Caco-2 (cell line): ENCODE measurements at regions of chr16 and their contacts with region 1.

Region 1: GRCh38 chr16:56356276-56357240 is 68.8 kb downstream of the AMFR start:
- DNase-seq: peak; percentile 89 to 91
- H3K4me3 ChIP-seq: peak overlapping the region; percentile 37
- H3K4me3 Mint-ChIP-seq: peak overlapping the region; percentile 87
- H3K27ac Mint-ChIP-seq: peak overlapping the region; percentile 43
- H3K4me1 ChIP-seq: peaks cover 9% of the 10 kb centered on the region
- H3K4me1 Mint-ChIP-seq: peaks cover 8% of the 10 kb centered on the region
- H3K27me3 ChIP-seq: no peaks in the 10 kb centered on the region
- H3K27me3 Mint-ChIP-seq: no peaks in the 10 kb centered on the region
- CTCF ChIP-seq: peak; percentile 89 to 99

Region 2: GRCh38 chr16:56275076-56275475 is 81.5 kb before region 1 on chr16:
- CTCF ChIA-PET with region 1: no interaction called
- POLR2A ChIA-PET with region 1: no interaction called
- intact Hi-C with region 1: no loop called
- DNase-seq: no peak
- H3K4me3 ChIP-seq: no peak overlapping the region
- H3K4me3 Mint-ChIP-seq: no peak overlapping the region
- H3K27ac Mint-ChIP-seq: no peak overlapping the region
- H3K4me1 ChIP-seq: peaks cover under 1% of the 10 kb centered on the region; the same call in 1 of the 2 replicates
- H3K4me1 Mint-ChIP-seq: no peaks in the 10 kb centered on the region
- H3K27me3 ChIP-seq: no peaks in the 10 kb centered on the region
- H3K27me3 Mint-ChIP-seq: no peaks in the 10 kb centered on the region
- CTCF ChIP-seq: no peak

Region 3: DNA sequence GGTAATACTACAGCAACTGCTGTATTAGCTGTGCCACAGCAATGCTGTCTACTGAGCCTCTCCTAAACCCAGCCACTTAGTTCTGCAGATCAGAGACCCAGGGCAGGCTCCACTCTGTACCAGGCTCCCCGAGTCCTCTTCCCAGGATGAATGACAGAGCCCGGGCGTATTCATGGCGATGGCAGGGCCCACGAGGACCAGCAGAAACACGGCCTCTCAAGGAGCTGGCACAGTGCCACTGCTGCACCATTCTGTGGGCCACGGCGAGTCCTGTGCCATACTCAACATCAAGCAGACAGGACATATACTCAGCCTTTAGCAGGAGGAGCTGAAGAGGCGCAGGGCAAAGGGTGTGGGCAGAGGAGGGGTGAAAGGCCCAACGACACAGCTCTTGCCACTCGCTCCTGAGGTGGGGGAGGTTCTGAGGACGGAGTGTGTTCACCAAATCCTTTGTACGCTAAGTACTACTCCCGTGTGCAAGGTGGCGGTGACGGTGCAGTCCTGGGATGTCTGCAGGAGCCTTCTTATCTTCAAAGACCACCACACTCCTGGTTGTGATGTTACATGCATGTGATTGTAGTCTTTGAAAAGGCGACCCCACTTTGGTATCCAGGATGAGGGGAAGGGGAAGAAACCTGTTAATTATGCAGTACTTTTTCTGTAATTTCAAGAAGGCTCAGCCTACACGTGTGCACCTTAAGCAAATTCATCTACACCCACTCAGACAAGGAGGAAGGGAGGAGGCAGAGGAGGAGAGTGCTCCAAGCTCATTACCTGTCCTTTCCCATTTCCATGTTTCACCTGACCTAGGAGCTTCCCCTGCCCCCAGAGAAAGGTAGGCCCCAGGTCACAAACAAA is 29.3 kb before region 1 on chr16:
- CTCF ChIA-PET with region 1: interaction called, 61 read pairs
- POLR2A ChIA-PET with region 1: no interaction called
- intact Hi-C with region 1: loop called (anchors 1 kb)
- DNase-seq: no peak
- H3K4me3 ChIP-seq: no peak overlapping the region
- H3K4me3 Mint-ChIP-seq: no peak overlapping the region
- H3K27ac Mint-ChIP-seq: no peak overlapping the region
- H3K4me1 ChIP-seq: no peaks in the 10 kb centered on the region
- H3K4me1 Mint-ChIP-seq: no peaks in the 10 kb centered on the region
- H3K27me3 ChIP-seq: no peaks in the 10 kb centered on the region
- H3K27me3 Mint-ChIP-seq: no peaks in the 10 kb centered on the region
- CTCF ChIP-seq: no peak

Region 4: GRCh38 chr16:56332464-56333079 is 24.0 kb before region 1 on chr16:
- CTCF ChIA-PET with region 1: interaction called, 61 read pairs
- POLR2A ChIA-PET with region 1: no interaction called
- intact Hi-C with region 1: loop called (anchors 1 kb)
- DNase-seq: peak; percentile 88 to 90
- H3K4me3 ChIP-seq: no peak overlapping the region
- H3K4me3 Mint-ChIP-seq: no peak overlapping the region
- H3K27ac Mint-ChIP-seq: no peak overlapping the region
- H3K4me1 ChIP-seq: no peaks in the 10 kb centered on the region
- H3K4me1 Mint-ChIP-seq: no peaks in the 10 kb centered on the region
- H3K27me3 ChIP-seq: no peaks in the 10 kb centered on the region
- H3K27me3 Mint-ChIP-seq: no peaks in the 10 kb centered on the region
- CTCF ChIP-seq: peak; percentile 54 to 93

Region 5: DNA sequence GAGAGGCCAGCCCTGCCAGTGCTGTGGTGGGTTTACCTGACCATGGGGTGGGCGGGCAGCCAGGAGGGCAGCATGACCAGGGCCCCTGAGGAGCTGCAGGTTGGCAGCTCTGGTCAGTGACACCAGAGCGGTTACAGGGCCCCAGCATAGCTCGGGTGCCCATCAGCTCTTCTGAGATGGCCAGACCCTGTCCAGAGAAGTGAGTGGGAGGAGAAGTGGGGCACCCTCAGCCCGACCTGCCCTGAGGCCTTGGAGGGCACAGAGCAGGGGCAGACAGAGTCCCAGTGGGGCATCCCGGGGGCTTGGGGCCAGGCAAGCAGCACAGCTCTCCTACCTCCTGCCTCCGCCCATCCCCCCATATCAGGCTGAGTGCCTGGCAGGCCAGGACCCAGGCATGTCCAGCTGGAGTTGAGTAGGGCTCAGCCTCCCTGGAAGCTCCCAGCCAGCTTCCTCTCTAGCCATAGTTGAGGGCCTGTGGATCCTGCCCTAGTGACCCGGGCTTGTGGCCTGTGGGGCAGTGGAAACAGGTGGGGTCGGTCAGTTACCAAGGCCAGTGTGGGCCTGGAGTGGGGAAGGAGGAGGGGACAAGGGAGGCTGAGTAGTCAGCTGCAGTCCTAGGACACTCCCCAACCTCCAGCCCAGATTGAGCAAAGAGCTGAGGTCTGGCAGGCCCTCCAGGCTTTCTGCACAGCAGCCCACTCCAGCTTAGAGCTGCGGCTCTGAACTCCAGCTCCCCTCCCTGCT is 14.7 kb before region 1 on chr16:
- CTCF ChIA-PET with region 1: interaction called, 25 read pairs
- POLR2A ChIA-PET with region 1: no interaction called
- intact Hi-C with region 1: no loop called
- DNase-seq: no peak
- H3K4me3 ChIP-seq: no peak overlapping the region
- H3K4me3 Mint-ChIP-seq: no peak overlapping the region
- H3K27ac Mint-ChIP-seq: no peak overlapping the region
- H3K4me1 ChIP-seq: no peaks in the 10 kb centered on the region
- H3K4me1 Mint-ChIP-seq: no peaks in the 10 kb centered on the region
- H3K27me3 ChIP-seq: no peaks in the 10 kb centered on the region
- H3K27me3 Mint-ChIP-seq: no peaks in the 10 kb centered on the region
- CTCF ChIP-seq: no peak